CD8-positive, alpha-beta memory T cell (primary cell): ENCODE measurements at regions of chr2 and their contacts with region 1.

Region 1: DNA sequence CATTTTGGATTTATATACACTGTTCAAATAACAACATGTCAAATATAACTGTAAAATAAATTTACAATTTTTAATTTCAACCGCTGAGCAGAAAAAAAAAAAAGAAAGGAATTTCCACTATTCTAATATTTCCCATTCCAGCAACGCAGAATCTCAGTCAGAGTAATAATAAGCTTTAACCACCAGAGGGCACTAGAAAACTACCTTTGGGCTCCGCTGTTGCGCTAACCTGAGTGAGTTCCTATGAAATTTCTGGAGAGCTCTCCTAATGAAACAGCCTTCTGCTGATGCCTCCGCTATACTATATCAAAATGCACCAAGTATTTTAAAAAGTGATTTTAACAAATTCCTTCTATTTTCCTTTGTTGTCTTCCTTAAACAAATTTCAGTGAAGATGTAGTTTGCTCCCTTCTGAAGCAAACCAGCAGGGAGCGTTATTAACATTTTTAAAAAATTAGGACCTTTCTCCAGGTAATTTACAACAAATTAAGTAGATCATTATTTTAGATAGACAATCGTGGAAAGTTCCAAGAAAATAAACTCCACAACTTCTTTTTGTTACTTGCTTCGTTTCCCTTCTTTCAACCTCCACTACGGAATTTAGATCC is 23.0 kb downstream of the ERMN start:
- DNase-seq: peak in 4 of 5 donors; percentile 14 to 56 (median 54)
- H3K4me3 ChIP-seq: no peak overlapping the region
- H3K4me3 Mint-ChIP-seq: no peak overlapping the region
- H3K27ac ChIP-seq: no peak overlapping the region
- H3K27ac Mint-ChIP-seq: no peak overlapping the region
- H3K4me1 ChIP-seq: no peaks in the 10 kb centered on the region
- H3K4me1 Mint-ChIP-seq: peaks cover 2 to 11% (median 10%) of the 10 kb centered on the region in 3 donors
- H3K27me3 ChIP-seq: no peaks in the 10 kb centered on the region
- H3K27me3 Mint-ChIP-seq: peaks cover 4% of the 10 kb centered on the region in 2 donors

Region 2: DNA sequence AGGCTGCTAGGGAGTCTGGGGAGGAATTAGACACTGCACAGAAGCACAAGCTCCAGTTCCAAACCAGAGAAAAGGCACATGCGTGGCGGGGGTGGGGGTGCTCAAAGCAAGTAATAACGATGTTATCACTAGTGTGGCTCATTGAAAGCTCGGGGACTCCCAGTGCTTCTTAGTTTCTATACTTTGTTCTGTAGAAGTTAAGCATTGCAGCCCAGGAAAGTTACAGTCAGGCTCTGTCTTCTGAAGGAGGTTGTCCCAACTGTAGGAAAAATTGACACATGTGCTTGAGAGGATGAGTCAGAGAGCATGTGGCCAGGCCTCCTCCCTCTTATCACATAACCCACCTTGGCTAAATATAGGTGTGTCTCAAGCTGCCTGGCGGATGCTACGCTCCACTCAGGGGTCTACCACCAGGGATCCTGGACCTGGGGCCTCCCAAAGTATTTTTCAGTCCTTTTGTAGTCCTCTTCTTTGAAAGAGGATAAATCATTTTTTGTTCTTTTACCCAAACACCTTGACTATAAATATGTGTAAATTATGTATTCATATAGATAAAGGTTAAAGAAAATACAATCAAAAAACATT is 41.3 kb before region 1 on chr2:
- CTCF ChIA-PET with region 1: no interaction called
- POLR2A ChIA-PET with region 1: no interaction called
- DNase-seq: peak in 1 of 5 donors; percentile 45
- H3K4me3 ChIP-seq: peak overlapping the region; percentile 24
- H3K4me3 Mint-ChIP-seq: peak overlapping the region in 3 of 7 donors; percentile 3 to 34 (median 27)
- H3K27ac ChIP-seq: peak overlapping the region; percentile 86
- H3K27ac Mint-ChIP-seq: no peak overlapping the region
- H3K4me1 ChIP-seq: no peaks in the 10 kb centered on the region
- H3K4me1 Mint-ChIP-seq: peaks cover 5 to 10% (median 9%) of the 10 kb centered on the region in 3 donors
- H3K27me3 ChIP-seq: no peaks in the 10 kb centered on the region
- H3K27me3 Mint-ChIP-seq: no peaks in the 10 kb centered on the region

Region 3: GRCh38 chr2:157492189-157492773 is 189.7 kb after region 1 on chr2:
- CTCF ChIA-PET with region 1: interaction called, 16 read pairs
- POLR2A ChIA-PET with region 1: no interaction called
- DNase-seq: peak; percentile 31 to 79 (median 54)
- H3K4me3 ChIP-seq: no peak overlapping the region
- H3K4me3 Mint-ChIP-seq: no peak overlapping the region
- H3K27ac ChIP-seq: no peak overlapping the region
- H3K27ac Mint-ChIP-seq: peak overlapping the region in 1 of 8 donors; percentile 22
- H3K4me1 ChIP-seq: peaks cover 14% of the 10 kb centered on the region
- H3K4me1 Mint-ChIP-seq: peaks cover 17 to 29% (median 21%) of the 10 kb centered on the region in 3 donors
- H3K27me3 ChIP-seq: no peaks in the 10 kb centered on the region
- H3K27me3 Mint-ChIP-seq: peaks cover 0 to 6% of the 10 kb centered on the region in 2 donors

Region 4: GRCh38 chr2:157596992-157597681 is 294.5 kb after region 1 on chr2:
- CTCF ChIA-PET with region 1: interaction called, 14 read pairs
- POLR2A ChIA-PET with region 1: interaction called, 3 read pairs
- DNase-seq: peak in 4 of 5 donors; percentile 26 to 62 (median 45)
- H3K4me3 ChIP-seq: no peak overlapping the region
- H3K4me3 Mint-ChIP-seq: peak overlapping the region in 6 of 7 donors; percentile 3 to 82 (median 45)
- H3K27ac ChIP-seq: no peak overlapping the region
- H3K27ac Mint-ChIP-seq: peak overlapping the region in 1 of 8 donors; percentile 69
- H3K4me1 ChIP-seq: no peaks in the 10 kb centered on the region
- H3K4me1 Mint-ChIP-seq: peaks cover 6 to 11% (median 9%) of the 10 kb centered on the region in 3 donors
- H3K27me3 ChIP-seq: no peaks in the 10 kb centered on the region
- H3K27me3 Mint-ChIP-seq: peaks cover 25% of the 10 kb centered on the region in 2 donors